ENCODE measurements at regions of chr7 and their contacts with region 1.

Region 1: DNA sequence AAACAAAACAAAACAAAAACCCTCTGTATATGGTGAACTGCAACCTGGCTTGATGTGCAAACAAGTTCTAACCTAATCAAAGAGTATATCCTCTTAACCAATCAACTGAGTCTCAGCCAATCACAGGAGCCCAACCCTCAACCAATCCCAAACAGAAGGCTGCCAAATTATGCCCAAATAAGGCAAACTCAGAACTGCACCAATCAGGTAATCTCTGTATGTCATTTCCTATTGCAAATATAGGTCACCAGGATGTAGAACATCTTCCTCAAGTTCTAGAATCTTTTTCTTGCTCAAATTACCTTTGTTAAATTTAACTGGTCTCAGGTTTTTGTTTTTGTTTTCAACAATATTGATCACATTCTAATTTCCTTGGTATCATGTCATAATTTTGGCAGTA is 5.2 kb downstream of the FAM133B start:
- DNase-seq: no peak
- H3K4me3 Mint-ChIP-seq: no peak overlapping the region
- H3K27ac Mint-ChIP-seq: peak overlapping the region; percentile 60
- H3K4me1 Mint-ChIP-seq: peaks cover 58% of the 10 kb centered on the region
- H3K27me3 Mint-ChIP-seq: no peaks in the 10 kb centered on the region

Region 2: GRCh38 chr7:92569134-92569533 is 15.9 kb before region 1 on chr7:
- CTCF ChIA-PET with region 1: interaction called, 3 read pairs
- POLR2A ChIA-PET with region 1: interaction called, 12 read pairs
- DNase-seq: no peak
- H3K4me3 Mint-ChIP-seq: no peak overlapping the region
- H3K27ac Mint-ChIP-seq: no peak overlapping the region
- H3K4me1 Mint-ChIP-seq: peaks cover 4% of the 10 kb centered on the region
- H3K27me3 Mint-ChIP-seq: no peaks in the 10 kb centered on the region

Measured in activated CD4-positive, alpha-beta memory T cell treated with anti-CD3 and anti-CD28 coated beads, Interleukin-2, amount 10 ng/mL, durations not matched to agents 7 days and 5 days (primary cell).